Naive thymus-derived CD4-positive, alpha-beta T cell (primary cell): ENCODE measurements at regions of chr20 and their contacts with region 1.

Region 1: GRCh38 chr20:49936153-49937027 is at the start of gene RNF114:
- DNase-seq: peak; percentile 79 to 92 (median 86)
- ATAC-seq: peak; percentile 99
- H3K4me3 ChIP-seq: peak within 1 kb of the TSS; percentile 90
- H3K4me3 Mint-ChIP-seq: peak within 1 kb of the TSS; percentile 95 to 100 (median 98)
- H3K27ac ChIP-seq: peak within 1 kb of the TSS; percentile 95
- H3K27ac Mint-ChIP-seq: peak within 1 kb of the TSS; percentile 83 to 98 (median 95)
- H3K4me1 ChIP-seq: peaks cover 20 to 27% of the 10 kb centered on the region in 2 donors
- H3K4me1 Mint-ChIP-seq: peaks cover 36 to 61% (median 53%) of the 10 kb centered on the region in 7 donors
- H3K27me3 ChIP-seq: no peaks in the 10 kb centered on the region
- H3K27me3 Mint-ChIP-seq: no peaks in the 10 kb centered on the region
- total RNA-seq, gene RNF114: 67.1 to 113 (median 101) TPM

Region 2: GRCh38 chr20:47944708-47945453 is 1991.5 kb before region 1 on chr20:
- CTCF ChIA-PET with region 1: no interaction called
- POLR2A ChIA-PET with region 1: no interaction called
- intact Hi-C with region 1: no loop called
- DNase-seq: no peak
- ATAC-seq: no peak
- H3K4me3 ChIP-seq: no peak overlapping the region
- H3K4me3 Mint-ChIP-seq: no peak overlapping the region
- H3K27ac ChIP-seq: no peak overlapping the region
- H3K27ac Mint-ChIP-seq: no peak overlapping the region
- H3K4me1 ChIP-seq: no peaks in the 10 kb centered on the region
- H3K4me1 Mint-ChIP-seq: no peaks in the 10 kb centered on the region
- H3K27me3 ChIP-seq: no peaks in the 10 kb centered on the region
- H3K27me3 Mint-ChIP-seq: peaks cover 0 to 24% (median 5%) of the 10 kb centered on the region in 5 donors

Region 3: GRCh38 chr20:49140834-49141233 is 795.6 kb before region 1 on chr20:
- CTCF ChIA-PET with region 1: no interaction called
- POLR2A ChIA-PET with region 1: no interaction called
- intact Hi-C with region 1: no loop called
- DNase-seq: no peak
- ATAC-seq: no peak
- H3K4me3 ChIP-seq: no peak overlapping the region
- H3K4me3 Mint-ChIP-seq: no peak overlapping the region
- H3K27ac ChIP-seq: no peak overlapping the region
- H3K27ac Mint-ChIP-seq: peak overlapping the region in 5 of 9 donors; percentile 10 to 69 (median 38)
- H3K4me1 ChIP-seq: no peaks in the 10 kb centered on the region
- H3K4me1 Mint-ChIP-seq: peaks cover 7 to 28% (median 20%) of the 10 kb centered on the region in 7 donors
- H3K27me3 ChIP-seq: no peaks in the 10 kb centered on the region
- H3K27me3 Mint-ChIP-seq: no peaks in the 10 kb centered on the region

Region 4: GRCh38 chr20:49219089-49219923 is 717.1 kb before region 1 on chr20 and contains the start of gene DDX27:
- CTCF ChIA-PET with region 1: interaction called, 3 read pairs
- POLR2A ChIA-PET with region 1: no interaction called
- intact Hi-C with region 1: loop called in 1 of 2 experiments (anchors 2 kb)
- DNase-seq: peak; percentile 90 to 98 (median 98)
- ATAC-seq: peak; percentile 92
- H3K4me3 ChIP-seq: peak within 1 kb of the TSS; percentile 91
- H3K4me3 Mint-ChIP-seq: peak within 1 kb of the TSS; percentile 88 to 100 (median 96)
- H3K27ac ChIP-seq: peak within 1 kb of the TSS; percentile 99
- H3K27ac Mint-ChIP-seq: peak within 1 kb of the TSS; percentile 89 to 100 (median 96)
- H3K4me1 ChIP-seq: peaks cover 9 to 11% of the 10 kb centered on the region in 2 donors
- H3K4me1 Mint-ChIP-seq: peaks cover 14 to 42% (median 26%) of the 10 kb centered on the region in 7 donors
- H3K27me3 ChIP-seq: no peaks in the 10 kb centered on the region
- H3K27me3 Mint-ChIP-seq: peaks cover 0 to 2% (median 0%) of the 10 kb centered on the region in 5 donors
- total RNA-seq, gene DDX27: 43.4 to 94.1 (median 65.7) TPM

Region 5: DNA sequence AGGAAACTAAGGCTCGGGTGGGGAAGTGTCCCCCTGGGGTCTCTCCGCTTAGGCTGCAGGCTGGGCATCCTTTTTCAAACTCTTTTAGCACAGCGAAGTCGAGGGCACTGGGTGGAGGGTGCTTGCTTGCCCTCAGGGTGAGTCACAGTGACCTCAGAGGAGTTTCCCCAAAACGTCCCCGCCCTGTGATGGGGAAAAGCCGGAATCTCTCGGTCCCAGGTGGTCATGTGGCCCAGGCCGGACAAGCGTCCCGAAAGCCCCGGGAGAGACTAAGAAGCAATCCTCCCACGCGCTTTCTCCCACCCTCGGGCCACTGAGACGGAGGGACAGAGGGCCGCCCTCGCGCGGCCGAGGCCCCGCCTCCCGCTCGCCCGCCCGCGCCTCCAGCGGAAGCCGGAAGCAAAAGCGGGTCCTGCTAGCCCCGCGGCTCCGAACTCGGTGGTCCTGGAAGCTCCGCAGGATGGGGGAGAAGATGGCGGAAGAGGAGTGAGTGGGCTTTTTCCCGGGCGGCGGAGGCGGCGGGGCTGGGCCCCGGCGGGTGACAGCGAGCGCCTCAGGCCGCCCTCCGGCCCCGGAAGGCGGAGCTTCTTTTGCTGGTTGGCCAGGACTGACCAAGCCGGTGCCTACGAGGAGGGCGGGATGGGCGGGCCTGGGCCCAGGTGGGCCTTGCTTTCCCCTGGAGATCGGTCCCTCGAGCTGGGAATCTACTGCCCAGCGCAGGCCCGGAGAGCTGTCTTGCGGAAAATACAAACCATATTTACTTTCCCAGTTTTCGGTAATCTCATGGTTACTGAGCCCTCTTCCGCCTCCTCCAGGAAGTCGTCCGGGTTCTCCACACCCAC is 123.7 kb before region 1 on chr20 and contains the start of gene SLC9A8:
- CTCF ChIA-PET with region 1: no interaction called
- POLR2A ChIA-PET with region 1: interaction called, 4 read pairs
- intact Hi-C with region 1: loop called in 1 of 2 experiments (anchors 2 kb)
- DNase-seq: peak; percentile 67 to 85 (median 75)
- ATAC-seq: peak; percentile 93
- H3K4me3 ChIP-seq: peak within 1 kb of the TSS; percentile 81
- H3K4me3 Mint-ChIP-seq: peak within 1 kb of the TSS; percentile 90 to 99 (median 94)
- H3K27ac ChIP-seq: peak within 1 kb of the TSS; percentile 95
- H3K27ac Mint-ChIP-seq: peak within 1 kb of the TSS; percentile 94 to 98 (median 96)
- H3K4me1 ChIP-seq: peaks cover 12 to 17% of the 10 kb centered on the region in 2 donors
- H3K4me1 Mint-ChIP-seq: peaks cover 13 to 44% (median 39%) of the 10 kb centered on the region in 7 donors
- H3K27me3 ChIP-seq: no peaks in the 10 kb centered on the region
- H3K27me3 Mint-ChIP-seq: no peaks in the 10 kb centered on the region
- total RNA-seq, gene SLC9A8: 21.7 to 42.5 (median 25.7) TPM

Region 6: DNA sequence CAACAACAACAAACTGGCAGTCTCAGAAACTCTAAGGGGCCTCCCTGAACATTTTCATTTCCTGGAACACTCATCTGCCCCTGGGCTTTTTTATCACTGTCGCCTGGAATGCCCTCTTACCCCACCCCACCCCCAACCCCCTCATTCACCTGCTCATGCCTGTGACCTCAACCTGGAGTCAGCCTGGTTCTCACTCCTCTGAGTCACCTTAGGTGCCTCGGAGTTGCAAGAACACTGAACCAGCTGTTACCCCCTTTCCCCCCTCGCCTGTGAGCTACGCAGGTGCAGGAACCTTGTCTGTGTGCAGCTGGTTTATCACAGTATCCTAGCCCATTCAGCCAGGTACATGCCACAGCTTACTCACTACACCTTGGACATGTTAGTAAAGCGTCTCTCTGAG is 33.6 kb after region 1 on chr20:
- CTCF ChIA-PET with region 1: no interaction called
- POLR2A ChIA-PET with region 1: no interaction called
- intact Hi-C with region 1: no loop called
- DNase-seq: no peak
- ATAC-seq: no peak
- H3K4me3 ChIP-seq: no peak overlapping the region
- H3K4me3 Mint-ChIP-seq: no peak overlapping the region
- H3K27ac ChIP-seq: no peak overlapping the region
- H3K27ac Mint-ChIP-seq: no peak overlapping the region
- H3K4me1 ChIP-seq: no peaks in the 10 kb centered on the region
- H3K4me1 Mint-ChIP-seq: no peaks in the 10 kb centered on the region
- H3K27me3 ChIP-seq: no peaks in the 10 kb centered on the region
- H3K27me3 Mint-ChIP-seq: no peaks in the 10 kb centered on the region

Region 7: DNA sequence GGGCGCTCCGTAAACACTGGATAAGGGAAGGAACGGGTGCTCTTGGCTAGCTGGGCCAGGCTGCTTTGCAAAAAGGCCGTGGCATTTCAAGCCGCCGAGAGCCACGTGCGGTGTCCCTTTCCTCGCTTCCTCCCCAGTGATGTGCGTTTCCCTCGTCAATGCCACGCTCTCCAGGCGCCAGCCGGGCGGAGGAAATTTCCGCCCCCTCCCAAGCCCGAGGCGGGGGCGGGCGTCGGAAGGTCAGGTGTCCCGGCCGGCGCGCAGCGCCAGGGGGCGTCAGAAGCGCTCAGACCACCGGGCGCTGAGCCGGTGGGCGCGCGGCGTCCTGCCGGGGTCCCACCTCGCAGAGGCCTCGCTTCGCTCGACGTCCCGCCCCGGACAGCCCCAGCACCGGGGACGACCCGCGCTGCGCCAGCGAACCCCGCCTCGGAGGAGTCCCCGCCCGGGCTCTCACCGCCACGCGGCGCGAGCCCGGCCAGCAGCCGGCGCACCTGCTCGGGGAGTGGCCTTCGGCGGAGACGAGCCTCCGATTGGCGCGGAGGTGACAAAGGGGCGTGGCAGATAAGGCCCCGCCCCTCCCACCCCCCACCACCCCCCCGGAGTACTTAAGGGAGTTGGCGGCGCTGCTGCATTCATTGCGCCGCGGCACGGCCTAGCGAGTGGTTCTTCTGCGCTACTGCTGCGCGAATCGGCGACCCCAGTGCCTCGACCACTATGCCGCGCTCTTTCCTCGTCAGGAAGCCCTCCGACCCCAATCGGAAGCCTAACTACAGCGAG is 46.1 kb after region 1 on chr20 and contains the start of gene SNAI1:
- CTCF ChIA-PET with region 1: no interaction called
- POLR2A ChIA-PET with region 1: interaction called, 3 read pairs
- intact Hi-C with region 1: loop called (anchors 1 kb)
- DNase-seq: peak; percentile 67 to 86 (median 84)
- ATAC-seq: peak; percentile 97
- H3K4me3 ChIP-seq: peak within 1 kb of the TSS; percentile 57
- H3K4me3 Mint-ChIP-seq: peak within 1 kb of the TSS; percentile 67 to 85 (median 76)
- H3K27ac ChIP-seq: peak within 1 kb of the TSS; percentile 72
- H3K27ac Mint-ChIP-seq: peak within 1 kb of the TSS; percentile 2 to 88 (median 68)
- H3K4me1 ChIP-seq: peaks cover 11 to 18% of the 10 kb centered on the region in 2 donors
- H3K4me1 Mint-ChIP-seq: peaks cover 12 to 31% (median 25%) of the 10 kb centered on the region in 7 donors
- H3K27me3 ChIP-seq: no peaks in the 10 kb centered on the region
- H3K27me3 Mint-ChIP-seq: peaks cover 0 to 37% (median 0%) of the 10 kb centered on the region in 5 donors
- total RNA-seq, gene SNAI1: 0.22 to 7.0 (median 0.34) TPM

Region 8: GRCh38 chr20:50054626-50055511 is 118.5 kb after region 1 on chr20:
- CTCF ChIA-PET with region 1: no interaction called
- POLR2A ChIA-PET with region 1: no interaction called
- intact Hi-C with region 1: no loop called
- DNase-seq: no peak
- ATAC-seq: no peak
- H3K4me3 ChIP-seq: no peak overlapping the region
- H3K4me3 Mint-ChIP-seq: no peak overlapping the region
- H3K27ac ChIP-seq: no peak overlapping the region
- H3K27ac Mint-ChIP-seq: no peak overlapping the region
- H3K4me1 ChIP-seq: no peaks in the 10 kb centered on the region
- H3K4me1 Mint-ChIP-seq: peaks cover 0 to 4% (median 0%) of the 10 kb centered on the region in 7 donors
- H3K27me3 ChIP-seq: no peaks in the 10 kb centered on the region
- H3K27me3 Mint-ChIP-seq: peaks cover 0 to 8% (median 4%) of the 10 kb centered on the region in 5 donors

Region 9: DNA sequence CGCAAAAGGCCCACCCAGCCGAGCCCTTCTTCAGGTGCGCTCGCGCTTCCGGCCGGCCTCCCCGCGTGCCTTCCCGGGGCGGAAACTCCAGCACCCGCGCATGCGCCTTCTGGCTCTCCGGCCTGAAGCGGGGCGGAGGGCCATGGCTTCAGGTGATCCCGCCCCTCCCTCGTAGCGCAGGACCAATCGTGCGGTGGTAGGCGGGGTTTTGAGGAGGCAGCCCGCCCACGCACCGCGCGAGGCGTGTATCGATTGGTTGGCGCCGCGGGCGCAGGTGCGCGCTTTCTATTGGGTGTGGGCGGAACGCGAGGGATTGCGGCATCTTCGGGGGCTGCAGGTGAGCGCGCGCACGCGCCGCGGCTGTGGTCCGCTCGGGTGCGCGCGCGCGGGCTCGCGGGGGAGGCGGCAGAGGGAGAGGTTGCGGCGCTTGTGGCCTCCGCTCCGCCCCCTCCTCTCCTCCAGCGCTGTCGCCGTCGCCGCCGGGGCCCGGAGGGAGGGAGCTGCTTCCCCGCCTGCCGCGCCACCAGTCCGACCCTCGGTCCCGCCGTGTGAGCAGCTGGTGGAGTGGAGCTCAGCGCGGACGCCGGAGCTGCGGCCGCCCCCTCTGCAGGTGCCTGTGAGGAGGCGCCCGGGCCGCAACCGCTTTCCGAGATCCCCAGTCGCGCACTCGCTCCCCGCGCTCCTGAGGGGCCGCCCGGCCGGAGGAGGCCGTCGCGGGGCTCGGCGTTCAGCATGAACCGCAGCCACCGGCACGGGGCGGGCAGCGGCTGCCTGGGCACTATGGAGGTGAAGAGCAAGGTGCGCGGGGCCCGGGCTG is 794.9 kb after region 1 on chr20 and contains the start of gene PARD6B:
- CTCF ChIA-PET with region 1: no interaction called
- POLR2A ChIA-PET with region 1: no interaction called
- intact Hi-C with region 1: loop called in 1 of 2 experiments (anchors 5 kb)
- DNase-seq: peak; percentile 94 to 100 (median 100)
- ATAC-seq: peak; percentile 97
- H3K4me3 ChIP-seq: peak within 1 kb of the TSS; percentile 80
- H3K4me3 Mint-ChIP-seq: peak within 1 kb of the TSS; percentile 79 to 94 (median 88)
- H3K27ac ChIP-seq: peak within 1 kb of the TSS; percentile 80
- H3K27ac Mint-ChIP-seq: peak within 1 kb of the TSS; percentile 75 to 95 (median 83)
- H3K4me1 ChIP-seq: peaks cover 9 to 14% of the 10 kb centered on the region in 2 donors
- H3K4me1 Mint-ChIP-seq: peaks cover 22 to 45% (median 34%) of the 10 kb centered on the region in 7 donors
- H3K27me3 ChIP-seq: no peaks in the 10 kb centered on the region
- H3K27me3 Mint-ChIP-seq: peaks cover 0 to 3% (median 0%) of the 10 kb centered on the region in 5 donors
- total RNA-seq, gene PARD6B: 5.2 to 10.8 (median 7.7) TPM